Activated CD4-positive, alpha-beta memory T cell treated with anti-CD3 and anti-CD28 coated beads for 36 hours (primary cell): ENCODE measurements at regions of chr16 and their contacts with region 1.

Region 1: GRCh38 chr16:68448360-68448970 is at the start of gene SMPD3:
- DNase-seq: peak; percentile 99
- H3K4me3 Mint-ChIP-seq: peak within 1 kb of the TSS; percentile 73
- H3K27ac Mint-ChIP-seq: no peak within 1 kb of the TSS
- H3K4me1 Mint-ChIP-seq: peaks cover 20% of the 10 kb centered on the region
- H3K27me3 Mint-ChIP-seq: peaks cover 17% of the 10 kb centered on the region
- total RNA-seq, gene SMPD3: 0.07 to 0.12 TPM

Region 2: GRCh38 chr16:68356249-68356918 is 92.1 kb before region 1 on chr16:
- CTCF ChIA-PET with region 1: no interaction called
- POLR2A ChIA-PET with region 1: no interaction called
- intact Hi-C with region 1: no loop called
- DNase-seq: peak; percentile 85
- H3K4me3 Mint-ChIP-seq: no peak overlapping the region
- H3K27ac Mint-ChIP-seq: no peak overlapping the region
- H3K4me1 Mint-ChIP-seq: peaks cover 28% of the 10 kb centered on the region
- H3K27me3 Mint-ChIP-seq: no peaks in the 10 kb centered on the region

Region 3: GRCh38 chr16:68396481-68396880 is 52.0 kb before region 1 on chr16:
- CTCF ChIA-PET with region 1: interaction called, 10 read pairs
- POLR2A ChIA-PET with region 1: no interaction called
- intact Hi-C with region 1: loop called (anchors 5 kb)
- DNase-seq: peak; percentile 63
- H3K4me3 Mint-ChIP-seq: no peak overlapping the region
- H3K27ac Mint-ChIP-seq: no peak overlapping the region
- H3K4me1 Mint-ChIP-seq: peaks cover 16% of the 10 kb centered on the region
- H3K27me3 Mint-ChIP-seq: no peaks in the 10 kb centered on the region

Region 4: DNA sequence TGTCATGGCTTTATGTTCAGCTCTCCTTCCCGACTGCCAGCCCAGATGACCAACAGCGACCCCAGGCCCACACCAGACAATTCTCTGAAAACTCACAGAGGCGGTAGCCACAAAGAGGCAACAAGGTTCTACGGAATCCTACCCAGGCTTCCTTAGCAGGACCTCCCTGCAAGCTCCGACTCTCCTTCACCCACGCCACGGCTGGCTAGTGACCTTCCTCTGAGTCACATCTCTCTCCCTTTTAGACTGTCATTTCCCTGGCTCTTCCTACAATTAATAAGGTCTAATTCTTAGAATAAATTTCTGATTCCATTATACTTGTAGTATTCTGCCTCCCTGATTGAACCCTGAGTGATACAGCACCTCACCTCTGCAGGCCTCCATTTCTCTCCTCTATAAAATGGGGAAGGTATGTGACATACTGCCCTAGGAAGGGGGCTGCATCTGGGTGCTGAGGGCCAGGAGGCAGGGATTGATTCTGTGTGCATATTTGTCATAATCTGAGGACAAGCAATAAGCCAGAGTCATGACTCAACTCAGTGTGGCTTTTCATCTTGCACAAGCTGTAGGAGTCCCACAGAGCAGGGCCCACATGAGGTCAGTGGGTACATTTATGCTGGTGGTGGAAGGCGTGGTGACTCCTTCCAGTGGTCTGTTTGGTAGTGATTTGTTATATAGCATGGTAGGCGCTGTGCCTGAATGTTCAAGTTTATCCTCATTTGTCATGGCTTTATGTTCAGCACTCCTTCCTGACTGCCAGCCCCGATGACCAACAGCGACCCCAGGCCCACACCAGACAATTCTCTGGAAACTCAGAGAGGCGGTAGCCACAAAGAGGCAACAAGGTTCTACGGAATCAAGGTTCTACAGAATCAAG is 46.4 kb before region 1 on chr16:
- CTCF ChIA-PET with region 1: interaction called, 10 read pairs
- POLR2A ChIA-PET with region 1: no interaction called
- intact Hi-C with region 1: loop called (anchors 5 kb)
- DNase-seq: peak; percentile 33
- H3K4me3 Mint-ChIP-seq: no peak overlapping the region
- H3K27ac Mint-ChIP-seq: no peak overlapping the region
- H3K4me1 Mint-ChIP-seq: peaks cover 15% of the 10 kb centered on the region
- H3K27me3 Mint-ChIP-seq: no peaks in the 10 kb centered on the region

Region 5: DNA sequence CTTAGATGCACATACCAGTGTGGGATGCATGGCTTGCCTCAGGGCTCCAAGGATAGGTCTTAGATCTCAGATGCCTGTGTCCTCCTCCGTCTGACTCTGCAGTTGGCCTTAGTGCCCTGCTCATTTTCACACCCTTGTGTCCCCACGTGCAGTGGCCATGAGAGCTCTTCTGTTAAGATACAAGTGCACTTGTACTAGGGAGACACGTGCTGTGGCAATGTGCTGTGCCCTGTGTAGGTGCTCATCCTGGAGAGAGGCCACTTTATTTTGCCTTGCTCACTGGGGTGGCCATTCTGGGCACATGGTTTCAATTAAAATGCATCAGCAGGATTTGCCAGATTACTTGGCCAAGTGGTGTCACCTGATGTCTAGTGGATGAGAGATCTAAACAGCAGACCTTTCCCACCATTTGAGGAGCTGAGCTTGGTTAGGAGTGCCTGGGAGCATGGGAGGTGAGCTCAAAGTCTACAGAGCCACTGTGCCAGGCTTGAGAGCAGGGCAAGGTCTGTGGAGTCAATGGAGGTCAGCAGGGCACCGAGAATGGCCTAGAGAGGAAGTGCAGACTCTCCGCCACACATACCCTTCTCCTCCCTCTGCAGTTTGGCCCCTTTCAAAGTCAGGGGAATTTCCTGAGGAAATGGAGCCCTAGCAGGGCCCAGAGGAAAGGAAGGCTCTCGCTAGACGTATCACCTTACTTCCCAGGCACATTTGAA is 25.0 kb after region 1 on chr16:
- CTCF ChIA-PET with region 1: no interaction called
- POLR2A ChIA-PET with region 1: no interaction called
- intact Hi-C with region 1: no loop called
- DNase-seq: no peak
- H3K4me3 Mint-ChIP-seq: no peak overlapping the region
- H3K27ac Mint-ChIP-seq: no peak overlapping the region
- H3K4me1 Mint-ChIP-seq: peaks cover 27% of the 10 kb centered on the region
- H3K27me3 Mint-ChIP-seq: no peaks in the 10 kb centered on the region

Region 6: GRCh38 chr16:68512183-68512582 is 63.7 kb after region 1 on chr16:
- CTCF ChIA-PET with region 1: interaction called, 3 read pairs
- POLR2A ChIA-PET with region 1: no interaction called
- intact Hi-C with region 1: loop called (anchors 1 kb)
- DNase-seq: no peak
- H3K4me3 Mint-ChIP-seq: no peak overlapping the region
- H3K27ac Mint-ChIP-seq: no peak overlapping the region
- H3K4me1 Mint-ChIP-seq: no peaks in the 10 kb centered on the region
- H3K27me3 Mint-ChIP-seq: peaks cover 3% of the 10 kb centered on the region

Region 7: DNA sequence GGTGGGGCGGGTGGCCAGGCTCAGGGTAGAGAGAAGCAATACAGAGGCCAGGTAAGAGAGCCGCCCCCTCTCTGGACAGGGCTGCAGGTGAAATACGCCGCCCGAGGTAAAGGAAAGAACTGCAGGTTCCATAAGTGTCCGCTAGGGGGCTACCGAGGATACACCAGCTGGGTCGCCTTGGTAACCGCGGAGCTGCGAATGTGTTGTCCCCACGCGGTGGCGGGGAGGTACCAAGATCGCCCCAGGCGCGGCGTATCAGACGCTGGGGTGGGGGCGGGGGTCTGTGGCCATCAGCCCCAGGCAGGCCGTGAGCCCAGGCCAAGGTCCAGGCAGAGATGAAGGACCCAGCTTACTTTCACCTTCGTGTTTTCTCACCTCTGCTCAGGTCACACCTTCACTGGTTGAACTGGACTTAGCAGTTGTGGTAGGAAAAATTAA is 72.2 kb after region 1 on chr16:
- CTCF ChIA-PET with region 1: interaction called, 5 read pairs
- POLR2A ChIA-PET with region 1: no interaction called
- intact Hi-C with region 1: loop called (anchors 1 kb)
- DNase-seq: peak; percentile 92
- H3K4me3 Mint-ChIP-seq: no peak overlapping the region
- H3K27ac Mint-ChIP-seq: no peak overlapping the region
- H3K4me1 Mint-ChIP-seq: peaks cover 6% of the 10 kb centered on the region
- H3K27me3 Mint-ChIP-seq: peaks cover 1% of the 10 kb centered on the region

Region 8: DNA sequence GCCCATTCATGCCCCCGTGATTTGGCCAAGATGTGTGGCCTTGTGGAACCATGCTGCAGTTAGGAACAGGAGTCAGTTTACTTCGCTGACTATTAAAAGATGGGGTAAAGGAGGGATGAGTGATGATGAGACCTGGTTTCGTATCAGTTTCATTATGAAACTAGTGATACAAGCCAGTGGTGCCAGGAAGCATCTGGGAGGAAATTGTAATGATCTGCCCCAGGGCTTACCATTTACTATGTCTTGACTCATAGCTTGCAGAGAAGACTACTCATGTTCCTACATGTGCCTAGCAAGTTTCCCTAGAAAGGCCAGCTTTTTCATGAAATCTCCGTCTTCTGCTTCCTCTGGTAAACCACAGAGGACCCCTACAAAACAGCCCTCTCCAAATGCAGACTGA is 219.8 kb after region 1 on chr16:
- CTCF ChIA-PET with region 1: no interaction called
- POLR2A ChIA-PET with region 1: no interaction called
- intact Hi-C with region 1: no loop called
- DNase-seq: peak; percentile 65
- H3K4me3 Mint-ChIP-seq: no peak overlapping the region
- H3K27ac Mint-ChIP-seq: peak overlapping the region; percentile 75
- H3K4me1 Mint-ChIP-seq: peaks cover 24% of the 10 kb centered on the region
- H3K27me3 Mint-ChIP-seq: peaks cover 2% of the 10 kb centered on the region